Activated CD4-positive, alpha-beta memory T cell treated with anti-CD3 and anti-CD28 coated beads for 36 hours (primary cell): ENCODE measurements at regions of chr9 and their contacts with region 1.

Region 1: DNA sequence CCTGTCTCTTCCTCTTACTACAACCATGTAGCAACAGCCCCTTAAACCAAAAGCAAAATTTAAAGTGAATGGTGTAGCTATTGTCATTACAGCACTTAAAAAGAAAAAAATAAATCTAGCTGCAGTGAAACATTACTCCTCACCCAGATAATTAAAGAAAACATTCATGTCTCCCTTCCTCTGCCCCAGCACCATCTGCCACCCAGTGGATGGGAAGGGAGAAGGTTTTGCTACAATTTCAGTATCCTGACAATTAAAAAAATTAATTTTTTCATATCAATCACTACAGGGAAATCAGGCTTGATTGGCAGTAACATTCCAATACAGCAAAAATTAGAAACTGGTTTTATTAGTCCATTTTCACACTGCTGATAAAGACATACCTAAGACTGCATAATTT is 147.4 kb upstream of the PUM3 start:
- DNase-seq: no peak
- H3K4me3 Mint-ChIP-seq: no peak overlapping the region
- H3K27ac Mint-ChIP-seq: no peak overlapping the region
- H3K4me1 Mint-ChIP-seq: no peaks in the 10 kb centered on the region
- H3K27me3 Mint-ChIP-seq: peaks cover 5% of the 10 kb centered on the region

Region 2: DNA sequence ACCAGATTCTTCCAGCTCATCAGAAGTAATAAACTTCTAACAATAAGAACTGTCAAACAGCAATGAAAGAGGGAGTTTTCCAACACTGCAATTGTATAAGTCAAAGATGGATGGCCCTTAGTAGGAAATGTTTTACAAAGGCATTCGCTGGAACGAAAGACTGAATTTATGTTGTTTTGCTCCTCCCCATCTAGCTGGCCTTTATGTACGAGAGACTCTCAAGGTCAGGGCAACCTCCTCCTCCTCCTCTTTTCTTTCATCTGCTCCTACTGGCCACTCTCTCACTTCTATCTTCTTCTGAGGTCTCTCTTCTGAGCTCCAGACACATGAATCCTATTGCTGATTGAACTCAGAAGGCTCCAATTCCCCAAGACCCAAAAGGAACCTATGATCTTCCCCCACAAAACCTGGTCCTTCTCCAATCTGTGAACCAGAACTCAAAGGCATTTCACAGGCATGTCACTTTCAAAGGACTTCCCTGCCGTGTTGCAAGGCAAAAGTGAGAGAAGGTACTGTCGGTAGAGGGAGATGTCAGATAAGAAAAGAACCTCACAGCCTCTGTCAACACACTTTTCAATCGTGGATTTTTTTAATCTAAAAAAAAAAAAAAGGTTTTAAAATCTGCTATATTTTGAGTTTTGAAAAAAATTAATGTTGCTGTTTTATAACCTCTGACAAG is 118.9 kb before region 1 on chr9:
- CTCF ChIA-PET with region 1: no interaction called
- POLR2A ChIA-PET with region 1: no interaction called
- intact Hi-C with region 1: loop called (anchors 10 kb)
- DNase-seq: no peak
- H3K4me3 Mint-ChIP-seq: no peak overlapping the region
- H3K27ac Mint-ChIP-seq: no peak overlapping the region
- H3K4me1 Mint-ChIP-seq: peaks cover 6% of the 10 kb centered on the region
- H3K27me3 Mint-ChIP-seq: peaks cover 19% of the 10 kb centered on the region

Region 3: DNA sequence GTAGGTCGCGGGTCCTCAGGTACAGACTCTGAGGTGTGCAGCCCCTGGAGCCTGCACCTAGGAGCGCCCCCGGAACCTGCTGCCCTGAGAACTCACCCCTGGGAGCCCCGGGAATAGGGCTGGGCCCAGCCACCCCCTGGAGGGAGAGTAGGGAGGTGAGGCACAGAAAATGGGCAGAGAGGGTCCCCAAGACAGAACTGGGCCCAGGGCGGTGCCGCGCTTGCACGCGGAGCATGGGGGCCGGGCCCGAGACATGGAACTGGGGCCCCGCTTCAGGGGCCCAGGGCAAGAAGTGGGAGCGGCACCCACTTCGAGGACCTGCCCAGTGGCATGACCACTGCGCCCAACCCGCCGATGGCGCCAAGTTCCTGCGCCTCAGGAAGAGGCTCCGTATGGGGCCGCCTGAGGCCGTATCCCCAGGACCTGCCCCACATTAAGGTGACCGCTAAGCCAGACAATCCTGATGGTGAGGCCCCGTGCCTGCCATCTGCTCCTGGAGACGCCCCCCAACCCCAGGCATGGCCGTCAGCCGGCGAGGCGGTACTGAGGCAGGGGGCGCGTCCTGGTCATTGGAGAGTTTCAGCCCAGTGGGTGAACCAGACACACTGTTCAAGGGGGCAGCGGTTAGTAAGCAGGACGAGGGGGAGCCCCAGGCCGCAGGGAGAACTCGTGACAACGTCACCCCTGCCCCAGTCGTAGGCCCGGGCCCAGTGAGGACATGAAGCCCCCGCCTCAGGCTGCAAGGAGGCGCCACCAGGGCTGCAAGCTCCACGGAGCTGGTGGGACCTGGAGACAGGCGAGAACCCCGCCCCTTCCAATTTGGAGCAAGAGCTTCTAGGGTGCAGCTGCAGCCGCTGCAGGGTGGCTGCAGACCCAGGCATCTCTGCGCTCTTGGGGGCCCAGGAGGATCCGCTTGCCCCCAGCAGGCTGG is 57.9 kb before region 1 on chr9:
- CTCF ChIA-PET with region 1: no interaction called
- POLR2A ChIA-PET with region 1: no interaction called
- intact Hi-C with region 1: loop called (anchors 10 kb)
- DNase-seq: no peak
- H3K4me3 Mint-ChIP-seq: no peak overlapping the region
- H3K27ac Mint-ChIP-seq: no peak overlapping the region
- H3K4me1 Mint-ChIP-seq: no peaks in the 10 kb centered on the region
- H3K27me3 Mint-ChIP-seq: no peaks in the 10 kb centered on the region

Region 4: DNA sequence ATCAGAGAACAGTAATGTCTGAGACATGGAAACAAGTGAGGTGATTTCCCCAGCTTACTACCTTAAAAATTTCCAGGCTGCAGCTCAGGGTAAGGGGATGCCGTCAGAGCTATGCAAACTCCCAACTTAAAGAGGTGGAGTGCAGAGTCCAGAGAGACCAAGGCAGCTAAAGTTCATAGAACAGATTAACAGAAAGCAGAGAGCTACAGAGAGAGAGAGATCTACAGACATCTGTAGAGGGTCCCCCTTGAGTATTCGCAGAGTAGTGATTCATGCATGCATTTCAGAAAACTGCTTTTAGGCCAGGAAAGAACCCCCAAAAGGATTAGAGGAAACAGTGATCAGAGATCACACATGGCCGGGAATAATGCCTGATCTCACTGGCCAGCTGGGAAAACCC is 158.8 kb after region 1 on chr9:
- CTCF ChIA-PET with region 1: no interaction called
- POLR2A ChIA-PET with region 1: no interaction called
- intact Hi-C with region 1: no loop called
- DNase-seq: no peak
- H3K4me3 Mint-ChIP-seq: no peak overlapping the region
- H3K27ac Mint-ChIP-seq: no peak overlapping the region
- H3K4me1 Mint-ChIP-seq: no peaks in the 10 kb centered on the region
- H3K27me3 Mint-ChIP-seq: no peaks in the 10 kb centered on the region